PC-3 (cell line): ENCODE measurements at regions of chr6 and their contacts with region 1.

Region 1: DNA sequence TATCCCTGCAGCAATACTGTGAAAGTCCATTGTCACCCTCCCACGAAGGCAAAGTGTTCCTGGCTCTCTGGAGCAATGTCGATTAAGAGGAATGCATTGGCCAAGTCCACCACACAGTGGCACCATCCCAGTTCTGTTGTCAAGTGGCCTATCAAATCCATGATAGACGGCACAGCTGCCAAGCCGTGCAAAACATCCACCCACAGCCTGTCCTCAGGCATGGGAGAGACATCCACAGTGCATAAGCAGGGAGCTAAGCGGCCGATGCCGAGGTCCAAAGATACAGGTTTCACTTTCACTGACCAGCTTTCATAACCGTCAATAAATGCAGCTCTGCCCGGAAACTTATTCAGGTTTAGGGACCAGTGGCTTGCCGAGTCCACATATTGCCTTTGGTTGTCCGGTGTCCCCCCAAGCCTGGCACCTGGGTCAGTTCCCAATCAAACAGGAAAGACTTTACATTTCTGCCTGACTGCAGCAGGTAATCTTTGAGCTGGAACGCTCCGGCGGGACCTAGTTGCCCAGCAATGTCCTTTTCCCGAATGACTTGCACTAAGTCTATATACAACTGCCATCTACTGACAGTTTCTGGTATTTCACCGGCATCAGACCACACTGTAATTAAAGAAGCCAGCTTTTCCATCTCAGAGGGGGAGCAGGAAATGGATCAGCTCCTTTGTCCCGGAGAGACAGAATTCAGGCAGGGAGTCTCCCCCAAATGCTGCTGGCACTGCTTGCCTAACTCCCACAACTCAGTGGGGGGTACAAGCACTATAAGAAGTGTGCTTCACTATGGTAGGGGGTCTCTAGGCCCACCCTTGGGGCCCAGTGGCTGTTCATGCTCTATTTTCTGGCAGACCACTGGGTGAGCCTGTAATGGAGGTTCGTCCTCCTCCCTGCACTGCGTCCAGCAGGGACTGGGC is 6.3 kb downstream of the ZKSCAN3 start:
- DNase-seq: peak; percentile 95
- ATAC-seq: peak; percentile 46
- H3K4me3 ChIP-seq: peak overlapping the region; percentile 84
- H3K27ac ChIP-seq: peak overlapping the region; percentile 87
- H3K4me1 ChIP-seq: peaks cover 49% of the 10 kb centered on the region
- H3K27me3 ChIP-seq: no peaks in the 10 kb centered on the region
- CTCF ChIP-seq: peak; percentile 77

Region 2: DNA sequence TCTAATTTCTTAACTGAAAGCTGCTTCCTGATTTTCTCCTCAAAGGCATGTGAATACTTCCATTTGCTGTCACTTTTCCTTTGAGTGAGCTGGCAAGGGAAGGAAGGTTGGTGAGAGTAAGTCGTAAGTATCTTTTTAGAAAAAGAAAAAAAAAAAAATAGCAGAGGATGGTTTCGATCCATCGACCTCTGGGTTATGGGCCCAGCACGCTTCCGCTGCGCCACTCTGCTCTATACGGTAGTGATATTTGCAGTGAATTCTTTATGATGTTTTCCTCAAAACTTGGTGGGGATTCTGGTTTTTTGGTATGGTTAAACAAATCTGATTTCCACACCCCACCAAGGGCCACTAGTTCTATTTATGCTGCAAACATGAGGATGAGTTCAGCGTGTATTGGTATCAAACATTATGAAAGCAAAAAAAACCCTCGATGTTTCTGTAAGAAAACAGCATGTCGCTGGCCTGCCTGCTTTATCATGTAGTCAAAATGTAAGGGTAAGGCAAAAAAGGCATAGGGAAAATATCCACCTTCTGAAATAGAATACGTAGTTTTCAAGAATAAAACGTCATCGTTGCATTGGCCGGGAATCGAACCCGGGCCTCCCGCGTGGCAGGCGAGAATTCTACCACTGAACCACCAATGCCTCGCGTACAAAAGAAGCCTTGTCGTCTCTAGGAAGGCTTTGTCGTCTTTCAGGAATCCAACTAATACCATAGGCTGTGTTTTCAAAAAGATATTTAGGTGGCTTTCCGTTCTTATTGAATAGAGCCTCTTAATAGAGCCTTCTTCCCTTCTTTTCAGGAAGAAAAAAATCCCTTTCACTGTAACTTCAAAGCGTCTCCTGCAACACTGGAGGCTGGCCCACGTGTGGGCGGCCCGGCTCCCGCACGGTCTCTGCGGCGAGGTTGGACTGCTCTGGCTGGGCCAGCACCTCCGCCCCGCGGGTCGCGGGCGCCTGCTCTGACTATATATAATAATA is 453.4 kb before region 1 on chr6:
- CTCF ChIA-PET with region 1: no interaction called
- POLR2A ChIA-PET with region 1: no interaction called
- intact Hi-C with region 1: loop called (anchors 10 kb)
- DNase-seq: peak; percentile 90
- ATAC-seq: peak; percentile 89
- H3K4me3 ChIP-seq: peak overlapping the region; percentile 72
- H3K27ac ChIP-seq: peak overlapping the region; percentile 5; the same call in 1 of the 2 replicates
- H3K4me1 ChIP-seq: no peaks in the 10 kb centered on the region
- H3K27me3 ChIP-seq: no peaks in the 10 kb centered on the region
- CTCF ChIP-seq: no peak

Region 3: GRCh38 chr6:28252009-28252975 is 103.7 kb before region 1 on chr6 and contains the start of gene ZKSCAN4:
- CTCF ChIA-PET with region 1: interaction called, 4 read pairs
- POLR2A ChIA-PET with region 1: no interaction called
- intact Hi-C with region 1: loop called (anchors 1 kb)
- DNase-seq: peak; percentile 93
- ATAC-seq: peak; percentile 89
- H3K4me3 ChIP-seq: peak within 1 kb of the TSS; percentile 93
- H3K27ac ChIP-seq: 0 out of 2 replicates have a peak within 1 kb of the TSS, but pooled peaks have one; percentile 4
- H3K4me1 ChIP-seq: peaks cover 12% of the 10 kb centered on the region
- H3K27me3 ChIP-seq: no peaks in the 10 kb centered on the region
- CTCF ChIP-seq: no peak
- total RNA-seq, gene ZKSCAN4: 2.3 and 3.7 TPM in 2 replicates

Region 4: GRCh38 chr6:28281288-28282064 is 74.5 kb before region 1 on chr6 and contains the start of gene PGBD1:
- CTCF ChIA-PET with region 1: interaction called, 6 read pairs
- POLR2A ChIA-PET with region 1: interaction called, 5 read pairs
- intact Hi-C with region 1: loop called (anchors 2 kb)
- DNase-seq: peak; percentile 80
- ATAC-seq: peak; percentile 94
- H3K4me3 ChIP-seq: peak within 1 kb of the TSS; percentile 96
- H3K27ac ChIP-seq: no peak within 1 kb of the TSS
- H3K4me1 ChIP-seq: peaks cover 19% of the 10 kb centered on the region
- H3K27me3 ChIP-seq: no peaks in the 10 kb centered on the region
- CTCF ChIP-seq: no peak
- total RNA-seq, gene PGBD1: 6.2 and 9.0 TPM in 2 replicates

Region 5: GRCh38 chr6:28383235-28384142 is 27.5 kb after region 1 on chr6:
- CTCF ChIA-PET with region 1: interaction called, 13 read pairs
- POLR2A ChIA-PET with region 1: no interaction called
- intact Hi-C with region 1: no loop called
- DNase-seq: peak; percentile 89
- ATAC-seq: peak; percentile 93
- H3K4me3 ChIP-seq: peak overlapping the region; percentile 78
- H3K27ac ChIP-seq: peak overlapping the region; percentile 38
- H3K4me1 ChIP-seq: peaks cover 12% of the 10 kb centered on the region
- H3K27me3 ChIP-seq: no peaks in the 10 kb centered on the region
- CTCF ChIP-seq: peak; percentile 80

Region 6: GRCh38 chr6:29909985-29910384 is 1554.0 kb after region 1 on chr6:
- CTCF ChIA-PET with region 1: no interaction called
- POLR2A ChIA-PET with region 1: no interaction called
- intact Hi-C with region 1: no loop called
- DNase-seq: no peak
- ATAC-seq: peak; percentile 37; the same call in 1 of the 2 replicates
- H3K4me3 ChIP-seq: no peak overlapping the region
- H3K27ac ChIP-seq: no peak overlapping the region
- H3K4me1 ChIP-seq: no peaks in the 10 kb centered on the region
- H3K27me3 ChIP-seq: no peaks in the 10 kb centered on the region
- CTCF ChIP-seq: no peak